PC-9 (cell line): ENCODE measurements at regions of chr11 and their contacts with region 1.

Region 1: GRCh38 chr11:57324886-57325734 is at the start of gene TNKS1BP1:
- DNase-seq: peak; percentile 94 to 99
- H3K4me3 ChIP-seq: peak within 1 kb of the TSS; percentile 57
- H3K27ac ChIP-seq: peak within 1 kb of the TSS; percentile 93
- H3K4me1 ChIP-seq: peaks cover 49% of the 10 kb centered on the region
- H3K27me3 ChIP-seq: no peaks in the 10 kb centered on the region
- CTCF ChIP-seq: no peak
- total RNA-seq, gene TNKS1BP1: 181 and 218 TPM in 2 replicates

Region 2: DNA sequence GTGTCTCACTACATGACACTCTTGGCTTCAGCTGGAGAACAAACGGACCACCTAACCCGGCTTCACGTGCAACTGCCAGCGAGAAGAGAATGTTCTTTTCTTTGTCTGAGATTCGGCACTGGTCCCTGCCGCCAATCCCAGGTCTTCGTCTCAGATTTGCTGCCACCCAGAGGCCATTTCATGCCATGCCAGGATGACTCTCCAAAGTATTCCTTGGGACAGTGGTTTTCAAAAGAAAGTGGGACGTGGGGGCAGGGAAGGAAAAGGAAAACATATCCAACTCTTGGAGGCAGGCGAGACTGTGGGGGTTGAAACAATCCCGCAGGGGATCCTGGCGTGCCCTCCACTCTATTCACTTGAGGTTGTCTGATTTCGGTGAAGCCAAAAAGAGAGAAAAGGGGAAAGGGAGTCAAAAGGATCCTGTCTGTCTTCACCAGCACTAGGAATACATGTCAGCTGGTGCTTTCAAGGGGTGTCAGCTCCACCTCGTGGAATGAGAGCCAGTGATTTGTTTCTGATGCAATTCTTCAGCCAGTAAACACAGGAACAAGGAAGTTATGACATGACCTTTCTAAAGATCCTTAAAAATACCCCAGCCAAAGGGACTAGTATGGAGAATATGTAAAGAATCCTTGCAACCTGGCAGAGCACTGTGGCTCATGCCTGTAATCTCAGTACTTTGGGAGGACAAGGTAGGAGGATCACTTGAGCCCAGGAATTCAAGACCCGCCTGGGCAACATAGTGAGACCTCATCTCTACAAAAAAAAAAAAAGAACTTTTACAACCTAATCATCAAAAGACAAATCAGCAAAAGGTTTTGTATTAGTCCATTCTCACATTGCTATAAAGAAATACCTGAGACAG is 47.0 kb before region 1 on chr11:
- CTCF ChIA-PET with region 1: no interaction called
- POLR2A ChIA-PET with region 1: interaction called, 10 read pairs
- intact Hi-C with region 1: loop called (anchors 1 kb)
- DNase-seq: peak; percentile 78 to 94
- H3K4me3 ChIP-seq: peak overlapping the region; percentile 49
- H3K27ac ChIP-seq: peak overlapping the region; percentile 90
- H3K4me1 ChIP-seq: peaks cover 38% of the 10 kb centered on the region
- H3K27me3 ChIP-seq: no peaks in the 10 kb centered on the region
- CTCF ChIP-seq: peak; percentile 89

Region 3: DNA sequence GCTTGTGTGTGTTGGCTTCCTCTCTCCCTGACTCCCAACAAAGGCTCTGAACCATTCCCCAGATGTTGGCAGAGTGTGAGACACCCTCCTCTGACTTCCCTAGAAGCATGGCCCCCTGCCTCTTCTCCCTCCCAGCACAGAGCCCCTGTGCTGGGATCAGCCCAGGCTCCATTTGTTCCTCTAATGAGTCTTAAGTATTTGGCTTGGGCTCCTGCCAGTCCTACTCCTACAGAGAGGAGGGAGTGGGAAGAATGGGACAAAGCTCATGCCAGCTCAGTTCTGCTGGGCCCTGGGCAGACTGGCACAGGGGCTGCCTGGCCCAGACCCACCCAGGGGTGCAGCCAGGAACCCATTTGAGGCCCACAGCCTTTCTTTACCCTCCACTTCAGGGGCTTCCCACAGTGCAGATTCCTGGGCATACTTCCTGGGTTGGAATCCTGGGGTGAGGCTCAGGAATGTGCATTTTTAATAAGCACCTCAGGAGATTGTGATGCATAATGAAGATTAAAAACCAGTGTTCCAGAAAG is 30.4 kb before region 1 on chr11:
- CTCF ChIA-PET with region 1: interaction called, 12 read pairs
- POLR2A ChIA-PET with region 1: no interaction called
- intact Hi-C with region 1: loop called (anchors 1 kb)
- DNase-seq: peak; percentile 57 to 68
- H3K4me3 ChIP-seq: no peak overlapping the region
- H3K27ac ChIP-seq: peak overlapping the region; percentile 89
- H3K4me1 ChIP-seq: peaks cover 40% of the 10 kb centered on the region
- H3K27me3 ChIP-seq: no peaks in the 10 kb centered on the region
- CTCF ChIP-seq: no peak

Region 4: DNA sequence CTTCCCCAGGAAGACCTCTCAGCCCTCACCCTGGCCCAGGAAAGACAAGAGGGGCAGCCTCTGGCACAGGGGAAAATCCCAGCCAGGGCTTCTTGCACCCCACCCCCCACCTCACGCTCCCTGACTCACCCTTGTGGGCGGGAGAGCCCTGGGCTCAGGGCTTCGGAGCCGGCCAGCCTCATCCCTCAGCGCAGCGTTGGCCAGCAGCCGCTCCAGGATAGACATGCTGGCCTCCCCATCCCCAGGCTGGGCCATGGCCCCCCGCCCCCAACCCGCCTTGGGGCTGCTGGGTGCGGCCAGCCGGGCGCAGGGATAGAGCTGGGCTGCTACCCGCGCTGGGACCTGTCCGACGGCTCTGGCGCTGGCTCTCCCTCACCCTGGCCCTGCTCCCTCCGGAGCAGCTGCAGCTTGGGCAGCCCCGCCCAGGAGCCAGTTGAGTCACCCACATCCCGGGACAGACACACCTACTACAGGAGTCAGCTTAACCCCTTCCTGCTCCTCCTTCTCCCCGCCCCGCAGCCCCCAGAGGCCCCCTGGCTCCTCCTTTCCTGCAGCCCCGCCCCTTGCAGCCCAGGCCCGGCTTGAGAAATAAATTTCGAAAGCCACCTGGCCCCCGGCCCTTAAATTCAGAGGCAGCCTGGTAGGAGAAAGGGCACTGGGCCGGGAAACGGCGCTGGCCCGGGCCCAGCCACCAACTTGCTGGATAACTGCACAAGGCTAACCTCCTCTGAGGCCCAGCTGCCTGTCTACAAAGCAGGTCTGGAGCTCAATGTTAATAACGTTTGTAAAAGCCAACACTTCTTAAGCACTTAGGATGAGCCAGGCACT is 13.8 kb before region 1 on chr11:
- CTCF ChIA-PET with region 1: interaction called, 15 read pairs
- POLR2A ChIA-PET with region 1: interaction called, 10 read pairs
- intact Hi-C with region 1: loop called (anchors 1 kb)
- DNase-seq: peak; percentile 94 to 99
- H3K4me3 ChIP-seq: peak overlapping the region; percentile 57
- H3K27ac ChIP-seq: peak overlapping the region; percentile 67
- H3K4me1 ChIP-seq: peaks cover 54% of the 10 kb centered on the region
- H3K27me3 ChIP-seq: no peaks in the 10 kb centered on the region
- CTCF ChIP-seq: no peak

Region 5: GRCh38 chr11:57335343-57336110 is 10.4 kb after region 1 on chr11 and contains the start of gene SSRP1:
- CTCF ChIA-PET with region 1: interaction called, 3 read pairs
- POLR2A ChIA-PET with region 1: interaction called, 12 read pairs
- intact Hi-C with region 1: loop called (anchors 1 kb)
- DNase-seq: peak; percentile 82 to 85
- H3K4me3 ChIP-seq: peak within 1 kb of the TSS; percentile 70
- H3K27ac ChIP-seq: peak within 1 kb of the TSS; percentile 28; the same call in 1 of the 2 replicates
- H3K4me1 ChIP-seq: peaks cover 31% of the 10 kb centered on the region
- H3K27me3 ChIP-seq: no peaks in the 10 kb centered on the region
- CTCF ChIP-seq: no peak
- total RNA-seq, gene SSRP1: 286 and 290 TPM in 2 replicates

Region 6: DNA sequence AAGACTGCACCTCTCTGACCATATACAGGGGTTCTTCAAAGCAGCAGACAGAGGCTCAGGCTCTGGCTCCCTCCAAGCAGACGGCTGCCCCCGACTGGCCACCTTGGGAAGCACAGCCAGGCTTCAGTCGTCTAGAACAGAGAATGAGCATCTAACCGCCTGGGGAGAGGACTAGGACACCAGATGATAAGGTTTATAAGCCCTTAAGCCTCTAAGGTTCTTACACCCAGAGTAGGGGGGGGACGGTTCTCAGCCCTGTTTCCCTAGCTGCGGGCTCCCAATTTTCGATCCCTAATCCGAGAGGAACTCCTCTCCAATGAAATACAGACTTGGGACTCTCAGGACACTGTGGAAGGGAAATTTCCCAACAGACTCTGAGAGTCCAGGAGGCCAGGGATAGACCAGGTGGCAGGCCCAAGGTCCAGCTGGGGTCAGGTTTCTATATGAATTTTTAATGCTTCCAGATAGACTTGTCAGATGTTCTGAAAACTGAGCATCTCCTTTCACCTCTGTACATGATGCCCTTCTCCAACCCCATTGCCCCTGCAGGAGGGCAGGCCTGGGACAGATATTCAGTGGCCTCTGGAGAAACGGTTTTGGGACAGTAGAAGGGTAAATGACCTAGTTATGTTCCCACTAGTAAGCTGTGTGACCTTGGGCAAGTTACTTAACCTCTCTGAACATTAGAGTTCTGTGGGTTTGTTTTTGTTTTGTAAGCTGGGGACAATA is 155.5 kb after region 1 on chr11:
- CTCF ChIA-PET with region 1: no interaction called
- POLR2A ChIA-PET with region 1: interaction called, 10 read pairs
- intact Hi-C with region 1: no loop called
- DNase-seq: peak; percentile 62 to 69
- H3K4me3 ChIP-seq: no peak overlapping the region
- H3K27ac ChIP-seq: no peak overlapping the region
- H3K4me1 ChIP-seq: peaks cover 6% of the 10 kb centered on the region; the same call in 1 of the 2 replicates
- H3K27me3 ChIP-seq: peaks cover 28% of the 10 kb centered on the region
- CTCF ChIP-seq: peak; percentile 90

Region 7: GRCh38 chr11:57527056-57527631 is 202.0 kb after region 1 on chr11:
- CTCF ChIA-PET with region 1: no interaction called
- POLR2A ChIA-PET with region 1: no interaction called
- intact Hi-C with region 1: no loop called
- DNase-seq: peak; percentile 55 to 75
- H3K4me3 ChIP-seq: no peak overlapping the region
- H3K27ac ChIP-seq: peak overlapping the region; percentile 20; the same call in 1 of the 2 replicates
- H3K4me1 ChIP-seq: peaks cover 26% of the 10 kb centered on the region
- H3K27me3 ChIP-seq: no peaks in the 10 kb centered on the region
- CTCF ChIP-seq: peak; percentile 98

Region 8: DNA sequence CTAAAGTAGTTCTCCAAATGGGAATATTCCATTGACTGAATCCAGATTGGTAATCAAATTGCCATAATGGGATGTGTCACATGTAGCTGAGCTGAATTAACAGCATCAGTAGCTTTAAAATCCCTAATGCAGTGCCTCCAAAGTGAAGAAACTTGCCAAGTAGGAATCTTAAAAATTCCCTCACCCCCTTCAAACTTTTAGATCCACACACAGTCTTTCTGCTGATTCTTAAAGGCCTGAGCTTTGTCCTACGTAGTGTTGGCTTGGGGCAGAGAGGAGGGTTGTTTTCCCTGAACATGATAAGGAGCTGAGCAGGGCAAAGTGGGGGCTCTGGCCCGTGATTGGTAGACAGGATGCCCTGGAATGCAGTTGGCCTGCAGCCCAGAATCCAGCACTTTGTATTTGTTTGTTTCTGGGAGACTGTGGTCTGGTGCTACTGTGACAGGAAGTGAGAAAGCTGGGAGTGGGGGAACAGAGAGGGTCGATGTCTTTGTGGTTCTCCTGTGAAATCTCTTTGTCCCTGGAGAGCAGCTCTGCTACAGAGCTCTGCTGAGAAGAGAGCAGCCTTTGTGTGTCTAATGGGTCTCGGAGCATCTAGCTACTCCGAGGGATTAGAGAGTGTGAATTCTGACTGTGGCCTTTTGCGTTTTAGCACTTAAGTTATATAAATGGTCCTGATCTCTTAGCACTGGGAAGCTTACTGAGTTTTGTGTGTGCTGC is 453.4 kb after region 1 on chr11:
- CTCF ChIA-PET with region 1: no interaction called
- POLR2A ChIA-PET with region 1: no interaction called
- intact Hi-C with region 1: loop called (anchors 10 kb)
- DNase-seq: peak; percentile 98 to 99
- H3K4me3 ChIP-seq: peak overlapping the region; percentile 50; the same call in 1 of the 2 replicates
- H3K27ac ChIP-seq: peak overlapping the region; percentile 93
- H3K4me1 ChIP-seq: peaks cover 93% of the 10 kb centered on the region
- H3K27me3 ChIP-seq: no peaks in the 10 kb centered on the region
- CTCF ChIP-seq: no peak